Activated CD4-positive, alpha-beta memory T cell treated with anti-CD3 and anti-CD28 coated beads, Interleukin-2, amount 10 ng/mL, durations not matched to agents 7 days and 5 days (primary cell): ENCODE measurements at regions of chr17 and their contacts with region 1.

Region 1: GRCh38 chr17:8173056-8173870 is 2.9 kb downstream of the TMEM107 start:
- DNase-seq: peak; percentile 84
- H3K4me3 Mint-ChIP-seq: peak overlapping the region; percentile 76
- H3K27ac Mint-ChIP-seq: peak overlapping the region; percentile 95
- H3K4me1 Mint-ChIP-seq: peaks cover 57% of the 10 kb centered on the region
- H3K27me3 Mint-ChIP-seq: no peaks in the 10 kb centered on the region

Region 2: DNA sequence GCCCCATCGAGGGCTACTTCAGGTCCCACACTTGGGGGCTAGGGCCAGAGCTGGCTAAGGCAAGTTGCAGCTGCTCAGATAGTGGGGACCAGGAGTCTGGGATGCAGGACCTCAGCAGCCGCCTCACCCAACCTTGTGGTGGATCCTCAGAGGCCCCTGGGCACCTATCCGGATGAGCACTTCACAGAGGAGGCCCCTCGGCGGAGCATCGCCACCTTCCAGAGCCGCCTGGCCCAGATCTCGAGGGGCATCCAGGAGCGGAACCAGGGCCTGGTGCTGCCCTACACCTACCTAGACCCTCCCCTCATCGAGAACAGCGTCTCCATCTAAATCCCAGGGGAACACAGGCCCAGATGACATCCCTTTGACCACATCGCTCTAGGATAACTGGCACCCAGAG is 125.0 kb before region 1 on chr17:
- CTCF ChIA-PET with region 1: no interaction called
- POLR2A ChIA-PET with region 1: no interaction called
- DNase-seq: no peak
- H3K4me3 Mint-ChIP-seq: no peak overlapping the region
- H3K27ac Mint-ChIP-seq: no peak overlapping the region
- H3K4me1 Mint-ChIP-seq: no peaks in the 10 kb centered on the region
- H3K27me3 Mint-ChIP-seq: peaks cover 5% of the 10 kb centered on the region

Region 3: GRCh38 chr17:8073627-8074484 is 99.4 kb before region 1 on chr17:
- CTCF ChIA-PET with region 1: no interaction called
- POLR2A ChIA-PET with region 1: interaction called, 14 read pairs
- DNase-seq: peak; percentile 84
- H3K4me3 Mint-ChIP-seq: peak overlapping the region; percentile 53
- H3K27ac Mint-ChIP-seq: no peak overlapping the region
- H3K4me1 Mint-ChIP-seq: peaks cover 27% of the 10 kb centered on the region
- H3K27me3 Mint-ChIP-seq: peaks cover 62% of the 10 kb centered on the region

Region 4: DNA sequence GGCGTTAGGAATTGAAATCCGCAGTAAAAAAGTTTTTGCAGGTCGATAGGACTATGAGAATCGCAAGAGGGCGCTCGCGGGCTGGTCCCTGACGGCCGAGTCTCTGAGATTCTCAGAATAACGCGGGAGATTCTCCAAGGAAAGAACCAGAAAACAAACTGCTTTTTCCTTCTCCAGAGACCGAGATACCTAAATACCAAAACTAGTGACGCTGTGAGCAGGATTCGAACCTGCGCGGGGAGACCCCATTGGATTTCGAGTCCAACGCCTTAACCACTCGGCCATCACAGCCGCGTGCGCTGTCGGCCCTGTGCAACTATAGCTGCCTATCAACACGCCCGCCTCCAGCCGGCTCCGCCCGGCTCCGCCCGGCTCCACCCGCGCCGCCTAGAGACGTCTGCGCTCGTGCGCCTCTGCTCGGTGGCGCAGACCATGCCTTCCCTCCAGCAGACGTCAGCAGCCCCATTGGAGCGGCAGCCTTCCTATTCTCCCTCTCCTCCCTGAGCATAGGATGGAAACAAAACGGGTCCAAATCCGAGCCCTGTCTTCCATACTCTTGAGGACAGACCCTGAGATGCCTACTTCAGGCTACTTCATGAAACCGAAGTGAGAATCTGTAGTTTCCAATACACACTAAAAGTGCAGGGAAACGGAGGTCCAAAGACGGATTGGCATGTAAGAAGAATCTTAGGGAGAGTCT is 34.4 kb before region 1 on chr17:
- CTCF ChIA-PET with region 1: interaction called, 6 read pairs
- POLR2A ChIA-PET with region 1: interaction called, 100 read pairs
- DNase-seq: peak; percentile 97
- H3K4me3 Mint-ChIP-seq: no peak overlapping the region
- H3K27ac Mint-ChIP-seq: no peak overlapping the region
- H3K4me1 Mint-ChIP-seq: peaks cover 3% of the 10 kb centered on the region
- H3K27me3 Mint-ChIP-seq: peaks cover 3% of the 10 kb centered on the region

Region 5: GRCh38 chr17:8189711-8190477 is 16.6 kb after region 1 on chr17 and contains the start of gene BORCS6:
- CTCF ChIA-PET with region 1: interaction called, 10 read pairs
- POLR2A ChIA-PET with region 1: interaction called, 336 read pairs
- DNase-seq: peak; percentile 97
- H3K4me3 Mint-ChIP-seq: no peak within 1 kb of the TSS
- H3K27ac Mint-ChIP-seq: no peak within 1 kb of the TSS
- H3K4me1 Mint-ChIP-seq: peaks cover 13% of the 10 kb centered on the region
- H3K27me3 Mint-ChIP-seq: no peaks in the 10 kb centered on the region
- total RNA-seq, gene BORCS6: 16.3 to 17.0 TPM

Region 6: GRCh38 chr17:8222630-8223356 is 49.5 kb after region 1 on chr17:
- CTCF ChIA-PET with region 1: interaction called, 6 read pairs
- POLR2A ChIA-PET with region 1: interaction called, 123 read pairs
- DNase-seq: peak; percentile 90
- H3K4me3 Mint-ChIP-seq: peak overlapping the region; percentile 95
- H3K27ac Mint-ChIP-seq: peak overlapping the region; percentile 99
- H3K4me1 Mint-ChIP-seq: peaks cover 69% of the 10 kb centered on the region
- H3K27me3 Mint-ChIP-seq: peaks cover 2% of the 10 kb centered on the region

Region 7: DNA sequence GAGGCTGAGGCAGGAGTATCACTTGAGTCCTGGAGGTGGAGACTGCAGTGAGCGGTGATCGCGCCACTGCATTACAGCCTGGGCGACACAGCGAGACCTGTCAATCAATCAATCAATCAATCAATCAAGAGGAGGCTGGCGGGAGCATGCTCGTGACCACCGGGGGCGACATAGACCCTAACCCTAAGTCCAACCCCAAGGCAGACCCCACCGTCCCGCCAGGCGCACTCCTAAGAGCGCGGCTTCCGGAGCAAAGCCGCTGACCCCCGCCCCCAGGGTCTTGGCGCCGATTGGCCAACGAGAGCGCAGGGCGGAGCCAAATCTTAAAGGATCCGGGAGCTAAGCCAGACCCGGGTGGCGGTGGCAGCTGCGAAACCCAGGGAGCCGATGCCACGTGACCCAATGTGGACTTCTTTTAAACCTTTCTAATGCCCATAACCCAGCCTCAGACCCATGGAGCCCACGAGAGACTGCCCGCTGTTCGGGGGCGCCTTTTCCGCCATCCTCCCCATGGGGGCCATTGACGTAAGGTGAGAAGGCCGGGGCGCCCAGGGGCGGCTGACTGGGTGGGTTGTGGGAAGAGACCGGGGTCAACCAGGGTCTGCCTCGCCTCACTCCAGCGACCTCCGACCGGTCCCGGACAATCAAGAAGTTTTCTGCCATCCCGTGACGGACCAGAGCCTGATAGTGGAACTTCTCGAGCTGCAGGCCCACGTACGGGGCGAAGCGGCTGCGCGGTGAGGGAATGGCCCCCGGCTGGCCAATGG is 115.3 kb after region 1 on chr17 and contains the start of gene RANGRF:
- CTCF ChIA-PET with region 1: no interaction called
- POLR2A ChIA-PET with region 1: interaction called, 16 read pairs
- DNase-seq: peak; percentile 88
- H3K4me3 Mint-ChIP-seq: peak within 1 kb of the TSS; percentile 94
- H3K27ac Mint-ChIP-seq: peak within 1 kb of the TSS; percentile 83
- H3K4me1 Mint-ChIP-seq: peaks cover 65% of the 10 kb centered on the region
- H3K27me3 Mint-ChIP-seq: no peaks in the 10 kb centered on the region
- total RNA-seq, gene RANGRF: 45.4 to 49.4 TPM

Region 8: GRCh38 chr17:8314797-8315763 is 141.8 kb after region 1 on chr17:
- CTCF ChIA-PET with region 1: no interaction called
- POLR2A ChIA-PET with region 1: no interaction called
- DNase-seq: no peak
- H3K4me3 Mint-ChIP-seq: no peak overlapping the region
- H3K27ac Mint-ChIP-seq: no peak overlapping the region
- H3K4me1 Mint-ChIP-seq: peaks cover 2% of the 10 kb centered on the region
- H3K27me3 Mint-ChIP-seq: peaks cover 15% of the 10 kb centered on the region